ENCODE measurements at regions of chr6 and their contacts with region 1.

Region 1: DNA sequence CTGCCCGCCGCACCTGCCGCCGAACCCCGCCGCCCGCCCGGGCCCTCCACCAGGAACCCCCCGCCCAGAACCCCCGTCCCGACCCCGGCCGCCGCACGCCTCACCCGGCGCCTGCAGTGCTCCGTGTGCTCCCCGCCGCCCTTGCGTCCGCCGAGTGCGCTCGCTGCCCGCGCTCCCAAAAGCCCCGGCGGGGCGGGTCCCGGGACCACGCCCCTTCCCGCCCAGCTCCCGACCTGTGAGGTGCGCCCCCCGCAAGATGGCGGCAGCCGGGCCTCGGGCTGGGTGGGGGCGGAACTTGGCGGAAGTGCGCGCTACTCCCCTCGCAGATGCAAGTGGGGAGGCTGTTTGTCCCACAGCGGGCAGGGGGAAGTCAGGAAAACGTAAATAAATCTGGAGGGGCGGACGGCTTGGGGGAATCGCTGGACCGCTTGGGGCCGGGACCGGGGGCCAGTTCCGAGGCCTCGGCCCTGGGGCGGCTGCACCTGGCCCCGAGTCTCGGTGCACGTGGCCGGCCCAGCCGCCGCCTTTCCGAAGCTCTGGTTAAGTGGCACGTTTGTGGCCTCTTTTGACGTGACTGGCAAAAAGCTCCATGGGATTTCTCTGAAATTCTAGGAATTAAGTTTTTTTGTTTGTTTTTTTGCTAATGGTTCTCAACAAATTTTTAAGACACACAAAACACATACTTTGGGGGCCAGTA is at the start of gene EZR:
- DNase-seq: peak; percentile 91
- ATAC-seq: peak; percentile 52
- H3K4me3 Mint-ChIP-seq: peak within 1 kb of the TSS; percentile 93
- H3K27ac Mint-ChIP-seq: peak within 1 kb of the TSS; percentile 87
- H3K4me1 Mint-ChIP-seq: peaks cover 38% of the 10 kb centered on the region
- H3K27me3 Mint-ChIP-seq: no peaks in the 10 kb centered on the region
- total RNA-seq, gene EZR: 197 to 203 TPM

Region 2: GRCh38 chr6:158559895-158560835 is 259.2 kb before region 1 on chr6 and contains the start of gene TMEM181:
- CTCF ChIA-PET with region 1: no interaction called
- POLR2A ChIA-PET with region 1: no interaction called
- intact Hi-C with region 1: loop called in 1 of 2 experiments (anchors 2 kb)
- DNase-seq: peak; percentile 93
- ATAC-seq: peak; percentile 90
- H3K4me3 Mint-ChIP-seq: peak within 1 kb of the TSS; percentile 96
- H3K27ac Mint-ChIP-seq: peak within 1 kb of the TSS; percentile 92
- H3K4me1 Mint-ChIP-seq: peaks cover 35% of the 10 kb centered on the region
- H3K27me3 Mint-ChIP-seq: no peaks in the 10 kb centered on the region
- total RNA-seq, gene TMEM181: 8.3 to 9.9 TPM

Region 3: GRCh38 chr6:158803733-158804143 is 15.6 kb before region 1 on chr6:
- CTCF ChIA-PET with region 1: interaction called, 4 read pairs
- POLR2A ChIA-PET with region 1: interaction called, 4 read pairs
- intact Hi-C with region 1: loop called (anchors 1 to 2 kb)
- DNase-seq: peak; percentile 40
- ATAC-seq: peak; percentile 68
- H3K4me3 Mint-ChIP-seq: peak overlapping the region; percentile 55
- H3K27ac Mint-ChIP-seq: peak overlapping the region; percentile 63
- H3K4me1 Mint-ChIP-seq: peaks cover 93% of the 10 kb centered on the region
- H3K27me3 Mint-ChIP-seq: no peaks in the 10 kb centered on the region

Region 4: GRCh38 chr6:158879180-158879579 is 59.8 kb after region 1 on chr6:
- CTCF ChIA-PET with region 1: no interaction called
- POLR2A ChIA-PET with region 1: no interaction called
- intact Hi-C with region 1: loop called in 1 of 2 experiments (anchors 2 kb)
- DNase-seq: peak; percentile 85
- ATAC-seq: peak; percentile 97
- H3K4me3 Mint-ChIP-seq: no peak overlapping the region
- H3K27ac Mint-ChIP-seq: peak overlapping the region; percentile 71
- H3K4me1 Mint-ChIP-seq: peaks cover 18% of the 10 kb centered on the region
- H3K27me3 Mint-ChIP-seq: no peaks in the 10 kb centered on the region

Region 5: GRCh38 chr6:159726918-159727716 is 907.8 kb after region 1 on chr6 and contains the start of gene WTAP:
- CTCF ChIA-PET with region 1: no interaction called
- POLR2A ChIA-PET with region 1: no interaction called
- intact Hi-C with region 1: loop called in 1 of 2 experiments (anchors 2 kb)
- DNase-seq: peak; percentile 99
- ATAC-seq: peak; percentile 91
- H3K4me3 Mint-ChIP-seq: peak within 1 kb of the TSS; percentile 95
- H3K27ac Mint-ChIP-seq: peak within 1 kb of the TSS; percentile 98
- H3K4me1 Mint-ChIP-seq: peaks cover 47% of the 10 kb centered on the region
- H3K27me3 Mint-ChIP-seq: no peaks in the 10 kb centered on the region
- total RNA-seq, gene WTAP: 87.2 to 91.5 TPM